Activated CD4-positive, alpha-beta T cell treated with anti-CD3 and anti-CD28 coated beads for 36 hours (primary cell): ENCODE measurements at regions of chr18 and their contacts with region 1.

Region 1: DNA sequence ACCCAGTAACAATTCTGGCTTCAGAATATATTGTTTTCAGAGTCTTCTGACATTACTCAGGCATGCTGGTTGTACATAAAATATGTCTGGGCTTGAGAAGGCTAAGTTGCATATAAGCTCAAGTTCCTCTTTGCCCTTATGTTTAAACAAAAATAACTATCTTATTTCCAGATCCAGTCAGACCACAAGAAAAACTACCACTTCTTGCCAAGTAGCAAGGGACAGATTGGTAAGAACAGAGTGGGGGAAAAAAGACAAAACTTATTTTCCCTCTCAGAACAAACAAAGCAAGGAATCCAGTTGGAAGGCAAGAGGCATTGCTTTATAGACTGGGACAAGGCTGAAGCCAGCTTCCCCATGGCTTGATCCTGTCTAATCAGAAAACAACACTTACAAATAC is 1036.7 kb upstream of the CELF4 start:
- DNase-seq: no peak
- ATAC-seq: no peak
- H3K4me3 Mint-ChIP-seq: no peak overlapping the region
- H3K27ac Mint-ChIP-seq: no peak overlapping the region
- H3K4me1 Mint-ChIP-seq: peaks cover 13% of the 10 kb centered on the region
- H3K27me3 Mint-ChIP-seq: no peaks in the 10 kb centered on the region

Region 2: GRCh38 chr18:38563396-38563980 is 38.9 kb before region 1 on chr18:
- CTCF ChIA-PET with region 1: no interaction called
- POLR2A ChIA-PET with region 1: no interaction called
- intact Hi-C with region 1: loop called in 1 of 2 experiments (anchors 5 kb)
- DNase-seq: peak; percentile 20
- ATAC-seq: peak; percentile 80
- H3K4me3 Mint-ChIP-seq: no peak overlapping the region
- H3K27ac Mint-ChIP-seq: no peak overlapping the region
- H3K4me1 Mint-ChIP-seq: peaks cover 5% of the 10 kb centered on the region
- H3K27me3 Mint-ChIP-seq: no peaks in the 10 kb centered on the region